ENCODE measurements at regions of chr5 and their contacts with region 1.

Region 1: DNA sequence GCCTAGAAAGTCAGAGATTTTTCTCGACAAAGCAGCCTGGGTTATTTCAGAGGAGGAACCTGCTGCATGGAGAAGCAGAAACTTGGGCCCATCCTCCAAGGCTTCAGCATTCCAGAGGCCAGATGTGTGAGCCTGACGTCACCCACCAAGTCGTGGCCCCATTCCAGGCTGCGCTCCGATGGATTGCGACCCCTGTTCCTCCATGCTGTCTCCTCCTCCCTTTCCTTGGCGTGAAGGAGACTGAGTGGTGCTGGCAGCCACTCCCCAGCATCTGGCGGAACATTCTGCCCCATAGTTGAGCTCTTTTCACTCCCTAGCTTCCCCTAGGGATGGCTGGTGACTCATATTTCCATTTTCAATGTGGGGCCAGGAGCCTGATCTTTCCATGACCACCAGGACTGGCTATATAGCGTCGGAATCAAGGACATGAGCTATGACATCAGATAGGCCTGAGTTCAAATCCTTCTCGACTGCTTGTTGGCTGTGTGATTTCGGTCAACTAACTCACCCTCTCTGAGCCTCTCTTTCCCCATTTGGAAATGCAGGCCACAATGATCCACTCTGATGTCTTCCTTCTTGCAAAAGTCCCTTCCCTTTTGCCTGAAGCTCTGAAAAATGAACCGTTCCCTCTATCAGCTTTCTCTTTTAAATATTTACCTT is 24.5 kb upstream of the DUSP1 start:
- DNase-seq: peak; percentile 96 to 99
- ATAC-seq: peak; percentile 95
- H3K4me3 ChIP-seq: no peak overlapping the region
- H3K27ac ChIP-seq: peak overlapping the region; percentile 20 to 86
- H3K4me1 ChIP-seq: peaks cover 0 to 3% of the 10 kb centered on the region in 2 donors
- H3K27me3 ChIP-seq: no peaks in the 10 kb centered on the region

Region 2: DNA sequence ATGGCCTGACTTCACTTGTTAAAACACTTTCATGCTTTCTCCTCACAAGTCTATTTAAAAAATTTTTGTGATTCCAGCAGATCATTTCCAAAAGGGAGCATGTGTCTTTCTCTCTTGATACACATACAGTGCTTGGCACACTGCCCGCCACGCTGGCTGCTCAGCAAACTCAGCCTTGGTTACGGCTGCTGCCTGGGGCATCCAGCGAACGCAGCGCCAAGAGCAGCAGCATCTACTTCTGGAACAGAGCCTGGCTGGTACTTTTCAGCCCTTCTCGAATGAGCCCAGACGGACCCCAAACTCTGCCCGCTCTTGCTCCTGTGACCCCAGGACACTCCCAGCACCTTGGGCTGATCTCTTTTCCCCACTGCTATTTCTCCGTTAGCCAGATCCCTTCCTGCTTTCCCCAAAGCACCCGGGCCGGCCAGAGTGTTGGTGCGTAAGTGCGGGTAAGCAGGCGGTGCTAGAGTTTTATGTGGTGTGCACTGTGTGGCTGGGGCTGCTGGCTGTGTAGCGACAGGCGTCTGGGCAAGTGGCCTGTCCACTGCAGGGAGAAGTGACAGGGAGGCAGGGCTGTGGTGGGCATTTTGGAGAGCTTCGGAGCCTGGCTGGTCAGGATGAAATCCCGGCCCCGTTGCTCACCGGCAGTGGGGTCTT is 414.3 kb before region 1 on chr5:
- intact Hi-C with region 1: no loop called
- DNase-seq: peak; percentile 78 to 92
- ATAC-seq: peak; percentile 70
- H3K4me3 ChIP-seq: no peak overlapping the region
- H3K27ac ChIP-seq: no peak overlapping the region
- H3K4me1 ChIP-seq: no peaks in the 10 kb centered on the region
- H3K27me3 ChIP-seq: no peaks in the 10 kb centered on the region

Region 3: GRCh38 chr5:172833686-172834414 is 38.4 kb after region 1 on chr5 and contains the start of gene ERGIC1:
- intact Hi-C with region 1: loop called in 1 of 2 experiments (anchors 5 kb)
- DNase-seq: peak; percentile 93 to 95
- ATAC-seq: peak; percentile 92
- H3K4me3 ChIP-seq: peak within 1 kb of the TSS; percentile 77 to 98
- H3K27ac ChIP-seq: peak within 1 kb of the TSS; percentile 43 to 96
- H3K4me1 ChIP-seq: peaks cover 0 to 6% of the 10 kb centered on the region in 2 donors
- H3K27me3 ChIP-seq: no peaks in the 10 kb centered on the region
- total RNA-seq, gene ERGIC1: 135 to 170 TPM

Region 4: DNA sequence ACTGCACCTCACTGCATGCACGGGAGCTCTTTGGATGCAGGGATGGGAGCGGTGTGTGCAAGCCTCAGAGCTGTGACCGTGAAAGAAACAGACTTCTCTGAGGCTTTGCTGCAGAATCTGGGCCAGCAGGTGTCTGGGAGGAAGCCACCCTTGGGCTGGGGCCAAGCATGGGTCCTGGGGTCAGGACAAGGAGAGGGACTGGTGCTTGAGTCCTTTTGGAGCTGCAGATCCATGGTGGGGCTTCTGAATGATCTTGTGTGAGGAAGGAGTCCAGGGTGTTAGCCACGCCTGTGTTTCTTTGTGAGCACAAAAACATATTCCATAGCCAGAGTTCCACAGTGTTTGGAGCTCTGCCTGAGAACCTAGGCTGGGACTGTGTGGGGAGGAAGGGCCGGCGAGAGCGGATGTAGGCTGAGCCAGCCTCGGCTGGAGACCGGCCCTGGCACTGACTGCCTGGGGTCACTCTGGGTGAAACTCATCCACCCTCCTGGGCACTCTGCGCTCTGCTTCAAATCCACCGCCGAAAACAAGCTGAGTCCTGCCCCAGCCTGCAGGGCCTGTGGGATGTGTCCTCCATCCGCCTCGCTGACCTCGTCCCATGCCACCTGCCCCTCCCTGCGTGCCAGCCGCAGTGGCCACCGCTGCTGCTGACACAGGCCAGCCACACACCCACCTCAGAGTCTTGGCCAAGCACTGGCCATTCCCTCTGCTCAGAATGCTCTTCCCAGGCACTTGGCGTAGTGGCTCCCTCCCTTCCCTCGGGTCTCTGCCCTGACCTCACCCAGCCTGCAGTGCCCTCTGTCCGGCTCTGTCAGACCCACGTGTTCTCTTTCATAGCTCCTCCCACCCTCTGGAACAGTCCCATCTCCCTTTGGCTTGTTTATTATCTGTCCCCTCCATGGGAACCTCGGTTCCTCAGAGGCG is 65.3 kb after region 1 on chr5:
- intact Hi-C with region 1: loop called in 1 of 2 experiments (anchors 5 kb)
- DNase-seq: peak; percentile 93 to 95
- ATAC-seq: peak; percentile 95
- H3K4me3 ChIP-seq: no peak overlapping the region
- H3K27ac ChIP-seq: peak overlapping the region; percentile 79 to 99
- H3K4me1 ChIP-seq: peaks cover 0 to 8% of the 10 kb centered on the region in 2 donors
- H3K27me3 ChIP-seq: no peaks in the 10 kb centered on the region

Region 5: DNA sequence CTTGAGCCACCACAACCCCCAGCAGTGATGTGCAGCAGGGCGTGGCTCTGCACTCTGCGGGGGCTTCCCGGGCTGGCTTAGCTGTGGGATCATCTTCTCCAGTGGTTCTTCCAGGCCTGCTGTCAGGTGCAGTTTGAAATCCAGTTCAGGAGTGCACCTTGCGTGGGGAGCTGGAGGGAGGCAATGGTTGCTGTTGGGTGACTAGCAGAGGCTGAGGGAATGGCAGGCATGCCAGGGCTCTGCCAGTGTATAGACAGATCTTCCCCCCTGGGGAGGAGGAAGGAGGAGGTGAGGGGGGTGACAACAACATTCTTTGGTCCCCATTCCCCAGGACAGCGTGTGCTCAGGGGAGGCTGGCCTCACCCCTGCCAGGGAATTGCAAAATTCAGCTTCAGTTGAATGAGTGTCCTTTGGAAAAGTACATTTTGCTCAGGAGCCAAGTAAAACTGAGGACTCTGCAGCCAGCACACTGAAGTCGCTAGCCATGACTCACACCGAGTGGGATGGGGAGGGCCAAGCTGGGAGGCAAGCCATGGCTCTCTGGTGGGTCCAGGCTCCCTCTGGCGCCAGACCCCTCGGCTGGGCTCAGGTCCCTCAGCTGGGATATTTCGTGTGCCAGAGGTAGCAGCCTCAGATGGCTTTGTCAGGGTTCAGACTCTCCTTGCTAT is 73.6 kb after region 1 on chr5:
- intact Hi-C with region 1: loop called in 1 of 2 experiments (anchors 1 kb)
- DNase-seq: peak; percentile 91 to 94
- ATAC-seq: peak; percentile 89
- H3K4me3 ChIP-seq: no peak overlapping the region
- H3K27ac ChIP-seq: peak overlapping the region; percentile 80 to 91
- H3K4me1 ChIP-seq: peaks cover 3 to 4% of the 10 kb centered on the region in 2 donors
- H3K27me3 ChIP-seq: no peaks in the 10 kb centered on the region

Region 6: DNA sequence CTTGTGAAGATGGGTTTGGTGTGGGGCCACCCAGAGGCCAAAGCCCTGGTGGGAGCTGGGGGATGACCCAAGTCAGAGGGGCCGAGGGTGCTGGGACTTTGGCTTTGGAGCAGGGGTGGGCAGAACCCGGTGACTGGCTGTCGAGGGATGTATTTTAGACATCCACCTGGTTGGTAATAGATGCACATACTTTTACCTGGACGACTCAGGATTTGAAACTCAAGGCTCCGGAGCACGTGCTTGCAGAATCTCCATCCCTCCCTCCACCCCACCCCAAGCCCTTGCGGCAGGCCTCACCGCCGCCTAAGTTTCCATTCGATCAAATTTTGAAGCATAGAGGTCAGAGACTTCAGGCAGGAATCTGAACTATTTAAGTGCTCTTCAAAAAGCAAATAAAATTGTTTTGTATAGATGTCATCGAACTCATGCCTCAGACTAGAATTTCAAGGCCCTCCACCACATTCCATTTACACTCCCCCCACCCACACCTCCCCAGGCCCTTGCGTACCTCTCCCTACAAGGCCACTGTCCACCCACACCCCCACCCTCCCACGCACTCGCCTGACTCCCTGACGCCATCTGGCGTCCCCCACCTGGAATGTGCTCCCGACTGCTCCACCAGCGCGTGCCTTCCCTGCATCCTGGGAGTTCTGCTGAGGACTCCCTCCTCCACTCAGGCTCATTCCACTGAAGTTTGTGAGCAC is 107.2 kb after region 1 on chr5:
- intact Hi-C with region 1: loop called in 1 of 2 experiments (anchors 5 kb)
- DNase-seq: peak; percentile 86 to 96
- ATAC-seq: peak; percentile 61
- H3K4me3 ChIP-seq: no peak overlapping the region
- H3K27ac ChIP-seq: peak overlapping the region; percentile 97 to 99
- H3K4me1 ChIP-seq: peaks cover 0 to 6% of the 10 kb centered on the region in 2 donors
- H3K27me3 ChIP-seq: no peaks in the 10 kb centered on the region

Measured in aorta (tissue), 5 donors.